Posterior vena cava (tissue), 2 donors: ENCODE measurements at regions of chr7 and their contacts with region 1.

Region 1: GRCh38 chr7:44218418-44219201 is 17.8 kb downstream of the YKT6 start:
- DNase-seq: peak; percentile 70

Region 2: GRCh38 chr7:44152971-44153911 is 65.4 kb before region 1 on chr7:
- intact Hi-C with region 1: no loop called
- DNase-seq: peak; percentile 70

Region 3: GRCh38 chr7:44184206-44184872 is 34.3 kb before region 1 on chr7:
- intact Hi-C with region 1: loop called in 1 of 2 experiments (anchors 1 kb)
- DNase-seq: no peak

Region 4: GRCh38 chr7:44460325-44460724 is 241.7 kb after region 1 on chr7:
- intact Hi-C with region 1: loop called in 1 of 2 experiments (anchors 10 kb)
- DNase-seq: no peak

Region 5: GRCh38 chr7:44638611-44639557 is 420.3 kb after region 1 on chr7:
- intact Hi-C with region 1: no loop called
- DNase-seq: peak; percentile 86